Motor neuron (in vitro differentiated cells): ENCODE measurements at regions of chr2 and their contacts with region 1.

Region 1: DNA sequence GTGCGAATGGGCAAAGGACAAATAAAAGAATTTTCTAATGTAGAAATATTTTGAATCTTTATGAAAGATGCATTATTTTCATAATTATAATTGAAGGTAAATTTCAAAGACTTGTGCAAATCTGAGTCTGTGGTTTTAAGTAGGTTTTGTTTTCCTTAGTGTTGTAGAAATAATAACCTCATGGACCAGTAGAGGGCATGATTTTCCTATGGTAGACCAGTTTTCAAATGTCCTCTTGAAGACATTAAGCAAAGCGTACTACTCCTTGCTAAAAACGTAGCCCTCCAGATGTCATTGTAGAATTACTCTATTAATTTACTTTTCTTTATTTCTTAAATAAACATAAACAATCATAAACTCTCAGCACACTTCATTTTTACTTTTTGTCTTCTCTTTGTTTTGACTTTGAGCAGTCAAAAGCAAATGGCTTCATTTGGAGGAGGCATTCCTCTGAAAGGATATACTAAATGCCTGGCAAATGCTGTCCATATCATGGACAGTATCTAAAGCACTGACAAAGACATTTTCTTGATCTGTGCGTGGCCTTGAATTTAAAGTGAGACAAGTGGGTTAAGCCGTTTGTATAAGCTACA is 85.8 kb upstream of the FAM237A start:
- ATAC-seq: peak in 4 of 8 experiments; percentile 36 to 81 (median 56)
- H3K4me3 ChIP-seq: no peak overlapping the region
- H3K27ac ChIP-seq: no peak overlapping the region
- H3K4me1 ChIP-seq: no peaks in the 10 kb centered on the region

Region 2: DNA sequence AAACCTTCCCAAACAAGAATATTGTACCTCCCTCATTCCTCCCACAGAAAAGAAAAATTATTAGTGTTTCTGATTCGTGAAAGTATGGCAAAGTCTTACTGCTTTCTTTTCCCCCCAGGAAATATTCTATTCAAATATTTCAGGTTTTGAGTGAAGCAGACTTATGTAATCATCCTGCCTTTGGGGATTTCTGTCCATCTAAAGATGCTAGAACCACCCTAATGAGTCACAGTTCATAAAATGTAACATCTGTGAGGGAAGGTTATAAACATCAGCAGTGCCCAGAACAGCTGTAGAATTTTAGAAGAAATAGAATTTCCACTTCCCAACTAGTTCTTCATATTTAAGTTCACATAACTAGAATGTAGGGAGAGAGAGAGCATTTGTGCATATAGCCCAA is 357.8 kb before region 1 on chr2:
- in situ Hi-C with region 1: no loop called
- ATAC-seq: peak in 3 of 8 experiments; percentile 62 to 98 (median 98)
- H3K4me3 ChIP-seq: no peak overlapping the region
- H3K27ac ChIP-seq: no peak overlapping the region
- H3K4me1 ChIP-seq: no peaks in the 10 kb centered on the region

Region 3: DNA sequence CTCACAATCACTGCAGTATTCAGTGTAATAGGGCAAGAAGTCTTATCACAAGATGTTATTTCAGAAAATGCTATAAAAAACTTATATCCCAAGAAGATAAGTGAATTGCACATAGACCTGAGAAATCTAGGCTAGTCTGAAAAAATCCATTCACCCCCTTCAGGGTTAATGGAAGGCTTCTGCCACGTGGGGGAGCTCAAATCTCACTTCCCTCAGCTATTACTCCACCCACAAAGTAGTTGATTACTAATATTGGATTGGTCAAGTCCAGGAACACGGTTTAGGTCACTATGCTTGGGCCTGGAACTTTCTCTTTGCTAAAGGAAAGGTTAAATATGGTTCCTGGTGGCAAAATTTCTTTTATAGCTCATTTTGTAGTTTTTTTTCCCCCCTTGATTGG is 164.3 kb before region 1 on chr2:
- in situ Hi-C with region 1: loop called in 1 of 9 experiments (anchors 25 kb)
- ATAC-seq: peak in 3 of 8 experiments; percentile 82 to 90 (median 90)
- H3K4me3 ChIP-seq: no peak overlapping the region
- H3K27ac ChIP-seq: no peak overlapping the region
- H3K4me1 ChIP-seq: peaks cover 0 to 7% of the 10 kb centered on the region in 2 donors

Region 4: GRCh38 chr2:206765242-206766056 is 209.0 kb after region 1 on chr2 and contains the starts of genes FASTKD2 and MDH1B:
- in situ Hi-C with region 1: loop called in 2 of 9 experiments (anchors 25 kb)
- ATAC-seq: peak; percentile 88 to 96 (median 95)
- H3K4me3 ChIP-seq: peak within 1 kb of the TSS; percentile 59 to 99 (median 64)
- H3K27ac ChIP-seq: peak within 1 kb of the TSS; percentile 84 to 92
- H3K4me1 ChIP-seq: peaks cover 5 to 13% of the 10 kb centered on the region in 2 donors
- total RNA-seq, gene FASTKD2: 26.2 to 43.0 (median 32.9) TPM
- total RNA-seq, gene MDH1B: 3.9 to 20.2 (median 4.4) TPM

Region 5: DNA sequence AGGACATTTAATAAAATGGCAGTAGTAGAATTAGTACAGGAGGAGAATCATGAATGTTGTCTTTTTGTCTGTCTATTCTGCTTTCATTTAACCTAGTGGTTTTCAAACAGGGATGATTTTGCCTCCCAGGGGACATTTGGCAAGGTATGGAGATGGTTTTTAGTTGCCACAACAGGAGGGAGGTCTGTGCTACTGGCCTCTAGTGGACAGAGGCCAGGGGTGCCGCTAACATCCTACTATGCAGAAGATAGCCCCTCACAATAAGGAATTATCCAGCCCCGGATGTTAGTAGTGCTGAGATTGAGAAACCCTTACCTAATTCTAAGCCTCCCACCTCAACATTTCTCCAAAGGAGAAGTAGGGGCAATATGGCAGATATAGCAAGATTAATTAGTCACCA is 227.3 kb after region 1 on chr2:
- in situ Hi-C with region 1: loop called in 1 of 9 experiments (anchors 25 kb)
- ATAC-seq: peak in 2 of 8 experiments; percentile 29 to 49
- H3K4me3 ChIP-seq: no peak overlapping the region
- H3K27ac ChIP-seq: no peak overlapping the region
- H3K4me1 ChIP-seq: no peaks in the 10 kb centered on the region